ENCODE measurements at regions of chr21 and their contacts with region 1.

Region 1: GRCh38 chr21:41926117-41926806 is 27.6 kb downstream of the C2CD2 start:
- DNase-seq: peak; percentile 68
- ATAC-seq: peak; percentile 70
- H3K4me3 ChIP-seq: peak overlapping the region; percentile 81
- H3K27ac ChIP-seq: peak overlapping the region; percentile 99
- H3K4me1 ChIP-seq: peaks cover 68% of the 10 kb centered on the region
- H3K27me3 ChIP-seq: no peaks in the 10 kb centered on the region
- CTCF ChIP-seq: no peak
- EP300 ChIP-seq: no peak
- POLR2A ChIP-seq: peak; percentile 45; the same call in 1 of the 2 replicates
- RAD21 ChIP-seq: no peak

Region 2: GRCh38 chr21:41207401-41208068 is 718.7 kb before region 1 on chr21:
- CTCF ChIA-PET with region 1: no interaction called
- POLR2A ChIA-PET with region 1: no interaction called
- RAD21 ChIA-PET with region 1: no interaction called
- SMC1A ChIA-PET with region 1: no interaction called
- in situ Hi-C with region 1: no loop called
- intact Hi-C with region 1: no loop called
- DNase-seq: no peak
- ATAC-seq: no peak
- H3K4me3 ChIP-seq: no peak overlapping the region
- H3K27ac ChIP-seq: no peak overlapping the region
- H3K4me1 ChIP-seq: no peaks in the 10 kb centered on the region
- H3K27me3 ChIP-seq: no peaks in the 10 kb centered on the region; a peak in 1 of 4 replicates
- CTCF ChIP-seq: no peak
- EP300 ChIP-seq: no peak
- POLR2A ChIP-seq: no peak
- RAD21 ChIP-seq: no peak

Region 3: GRCh38 chr21:41868062-41868710 is 58.1 kb before region 1 on chr21:
- CTCF ChIA-PET with region 1: no interaction called
- POLR2A ChIA-PET with region 1: interaction called, 3 read pairs
- RAD21 ChIA-PET with region 1: interaction called, 8 read pairs
- SMC1A ChIA-PET with region 1: interaction called, 9 read pairs
- in situ Hi-C with region 1: no loop called
- intact Hi-C with region 1: loop called (anchors 2 kb)
- DNase-seq: peak; percentile 79
- ATAC-seq: peak; percentile 60
- H3K4me3 ChIP-seq: peak overlapping the region; percentile 57; the same call in 1 of the 2 replicates
- H3K27ac ChIP-seq: peak overlapping the region; percentile 64
- H3K4me1 ChIP-seq: peaks cover 54% of the 10 kb centered on the region
- H3K27me3 ChIP-seq: no peaks in the 10 kb centered on the region
- CTCF ChIP-seq: no peak
- EP300 ChIP-seq: peak; percentile 68 to 85; a peak in 3 of 4 replicates
- POLR2A ChIP-seq: 0 out of 2 replicates have a peak, but pooled peaks have one; percentile 23
- RAD21 ChIP-seq: no peak

Region 4: GRCh38 chr21:41885341-41886029 is 40.8 kb before region 1 on chr21:
- CTCF ChIA-PET with region 1: no interaction called
- POLR2A ChIA-PET with region 1: interaction called, 28 read pairs
- RAD21 ChIA-PET with region 1: interaction called, 3 read pairs
- SMC1A ChIA-PET with region 1: interaction called, 51 read pairs
- in situ Hi-C with region 1: no loop called
- intact Hi-C with region 1: loop called (anchors 5 kb)
- DNase-seq: no peak
- ATAC-seq: no peak; the same call in 2 of the 3 replicates
- H3K4me3 ChIP-seq: no peak overlapping the region
- H3K27ac ChIP-seq: no peak overlapping the region
- H3K4me1 ChIP-seq: peaks cover 7% of the 10 kb centered on the region; the same call in 1 of the 2 replicates
- H3K27me3 ChIP-seq: no peaks in the 10 kb centered on the region
- CTCF ChIP-seq: no peak
- EP300 ChIP-seq: no peak
- POLR2A ChIP-seq: no peak
- RAD21 ChIP-seq: no peak

Region 5: DNA sequence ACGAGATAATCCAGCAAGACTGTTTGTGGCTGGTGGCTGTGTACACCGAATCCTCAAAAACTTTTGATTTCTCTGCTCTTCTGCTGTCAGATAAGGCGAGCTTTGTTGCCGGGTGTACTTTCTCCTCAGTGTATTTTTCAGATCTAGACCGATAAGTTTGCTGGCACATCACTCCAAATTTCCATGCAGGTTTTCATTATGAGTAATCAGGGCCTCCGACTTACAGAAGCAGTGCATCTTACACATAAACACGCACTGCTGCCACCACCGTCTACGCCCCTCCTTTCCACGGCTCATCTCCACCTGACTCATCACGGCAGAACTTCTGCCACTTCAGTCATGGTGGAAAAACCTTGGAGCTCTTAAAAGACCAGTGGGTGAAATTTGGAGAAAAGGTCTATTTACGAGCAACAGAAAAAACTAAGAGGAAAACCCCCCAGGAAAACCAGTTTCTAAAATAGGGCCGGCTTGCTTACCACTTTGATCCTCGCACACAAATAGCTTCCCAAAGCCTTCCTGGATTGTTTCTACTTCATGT is 76.2 kb after region 1 on chr21:
- CTCF ChIA-PET with region 1: interaction called, 10 read pairs
- POLR2A ChIA-PET with region 1: interaction called, 9 read pairs
- RAD21 ChIA-PET with region 1: interaction called, 12 read pairs
- SMC1A ChIA-PET with region 1: interaction called, 41 read pairs
- in situ Hi-C with region 1: loop called (anchors 5 kb)
- intact Hi-C with region 1: loop called (anchors 2 kb)
- DNase-seq: peak; percentile 86
- ATAC-seq: peak; percentile 92
- H3K4me3 ChIP-seq: peak overlapping the region; percentile 50
- H3K27ac ChIP-seq: peak overlapping the region; percentile 79
- H3K4me1 ChIP-seq: peaks cover 19% of the 10 kb centered on the region
- H3K27me3 ChIP-seq: no peaks in the 10 kb centered on the region
- CTCF ChIP-seq: no peak
- EP300 ChIP-seq: peak; percentile 80 to 85; a peak in 3 of 4 replicates
- POLR2A ChIP-seq: 0 out of 2 replicates have a peak, but pooled peaks have one; percentile 18
- RAD21 ChIP-seq: no peak

Region 6: DNA sequence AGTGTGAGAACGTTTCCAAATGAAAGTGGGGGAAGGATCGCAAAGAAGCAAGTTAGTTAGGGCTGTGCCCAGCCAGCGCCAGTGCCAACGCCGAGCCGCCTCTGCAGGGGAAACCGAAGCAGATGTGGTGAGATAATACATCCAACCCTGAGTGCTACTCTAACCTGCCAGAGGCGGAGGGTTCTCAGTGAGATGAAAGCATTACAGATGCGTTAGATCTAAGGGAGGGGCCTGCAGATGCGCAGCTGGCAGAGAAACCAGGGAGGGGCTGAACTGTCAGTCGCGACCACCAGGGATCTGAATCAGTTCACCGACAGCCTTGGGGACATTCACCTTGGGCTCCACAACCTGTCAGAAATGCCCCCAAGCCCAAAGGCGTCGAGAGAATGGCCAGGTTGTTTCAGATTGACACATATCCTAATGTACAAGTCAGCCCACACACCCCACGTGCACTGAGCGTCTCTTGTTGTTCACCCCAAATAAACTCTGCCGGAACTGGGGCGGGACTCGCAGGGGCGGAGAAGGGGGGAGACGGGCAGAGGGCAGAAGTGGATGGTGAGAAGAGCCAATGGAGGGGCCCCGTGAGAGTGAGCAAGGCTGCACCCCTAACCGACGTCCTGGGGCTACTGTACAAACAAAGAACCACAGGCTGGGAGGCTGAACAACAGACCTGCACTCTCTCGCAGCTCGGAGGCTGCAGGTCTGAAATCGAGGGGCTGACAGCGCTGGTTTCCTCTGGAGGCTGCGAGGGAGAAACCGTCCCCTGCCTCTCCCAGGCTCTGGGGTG is 136.2 kb after region 1 on chr21:
- CTCF ChIA-PET with region 1: no interaction called
- POLR2A ChIA-PET with region 1: interaction called, 3 read pairs
- RAD21 ChIA-PET with region 1: interaction called, 4 read pairs
- SMC1A ChIA-PET with region 1: interaction called, 4 read pairs
- in situ Hi-C with region 1: no loop called
- intact Hi-C with region 1: loop called (anchors 5 kb)
- DNase-seq: peak; percentile 82
- ATAC-seq: peak; percentile 74
- H3K4me3 ChIP-seq: peak overlapping the region; percentile 72
- H3K27ac ChIP-seq: peak overlapping the region; percentile 93
- H3K4me1 ChIP-seq: peaks cover 54% of the 10 kb centered on the region
- H3K27me3 ChIP-seq: no peaks in the 10 kb centered on the region
- CTCF ChIP-seq: no peak
- EP300 ChIP-seq: peak in 1 of 2 experiments; percentile 62; a peak in 1 of 4 replicates
- POLR2A ChIP-seq: peak; percentile 87
- RAD21 ChIP-seq: no peak

Measured in GM12878 (cell line).